ENCODE measurements at regions of chr7 and their contacts with region 1.

Region 1: DNA sequence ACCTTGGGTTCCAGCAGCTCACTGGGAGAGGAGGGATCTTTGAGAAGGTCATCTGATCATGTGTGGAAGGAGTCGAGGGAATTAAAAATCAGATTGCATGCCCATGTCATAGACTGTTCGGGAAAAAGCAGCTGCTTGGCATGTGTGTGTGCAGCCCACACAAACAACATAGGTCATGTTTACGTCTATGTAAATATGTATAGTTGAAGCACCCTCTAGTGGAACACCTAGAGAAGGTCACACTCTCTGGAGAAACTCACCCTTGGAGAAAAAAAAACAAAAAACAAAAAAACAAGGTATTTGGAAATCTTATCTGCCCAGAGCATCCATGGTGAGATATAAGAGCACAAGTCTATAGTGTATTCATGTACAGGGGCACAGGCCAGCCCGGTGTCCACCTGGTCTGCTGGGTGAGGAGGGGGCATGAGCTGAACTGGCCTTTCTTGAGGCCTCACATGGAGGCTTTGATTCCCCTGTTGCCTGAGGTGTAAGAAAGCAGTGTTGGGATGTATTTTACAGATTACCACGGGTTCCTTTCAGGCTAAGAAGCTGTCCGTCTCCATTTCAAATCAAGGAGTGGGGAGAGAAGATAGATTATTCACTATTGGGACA is 98.0 kb downstream of the NPY start:
- DNase-seq: peak; percentile 60

Region 2: GRCh38 chr7:23315366-23315765 is 1066.6 kb before region 1 on chr7:
- CTCF ChIA-PET with region 1: no interaction called
- POLR2A ChIA-PET with region 1: no interaction called
- DNase-seq: no peak

Region 3: GRCh38 chr7:24318326-24318725 is 63.7 kb before region 1 on chr7:
- CTCF ChIA-PET with region 1: interaction called, 11 read pairs
- POLR2A ChIA-PET with region 1: no interaction called
- DNase-seq: peak; percentile 9